ENCODE measurements at regions of chr10 and their contacts with region 1.

Region 1: DNA sequence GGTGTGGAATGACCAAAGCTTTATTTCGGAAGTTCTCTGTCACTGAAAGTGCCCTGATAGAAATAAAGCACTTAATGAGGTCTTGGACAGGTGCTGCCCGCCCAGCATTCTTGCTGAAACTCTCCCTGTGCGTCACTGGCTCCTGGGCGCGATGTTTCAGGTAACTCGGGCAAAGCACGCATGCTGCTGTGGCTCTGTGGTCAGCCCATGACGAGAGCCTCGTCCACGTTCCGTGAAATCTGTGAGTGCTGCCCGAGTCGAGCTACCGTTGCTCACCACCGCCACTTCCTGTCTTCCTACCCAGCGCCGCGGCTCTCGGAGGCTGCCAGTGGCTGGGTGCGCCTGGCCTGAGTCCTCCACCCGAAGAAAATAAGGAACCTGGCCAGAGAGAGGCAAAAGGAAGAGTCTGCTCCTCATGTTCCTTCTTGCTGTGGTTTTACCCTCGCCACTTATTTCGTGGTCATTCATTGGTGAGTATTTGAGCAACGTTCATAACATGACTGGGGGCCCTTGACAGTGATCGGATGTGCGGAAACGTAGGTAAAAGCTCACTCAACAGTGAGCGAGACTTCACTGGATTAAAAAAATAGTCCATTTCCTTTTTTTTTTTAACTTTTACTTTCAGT is 95.5 kb downstream of the MAP3K8 start:
- DNase-seq: peak; percentile 94
- H3K4me3 Mint-ChIP-seq: peak overlapping the region; percentile 78
- H3K27ac Mint-ChIP-seq: peak overlapping the region; percentile 90
- H3K4me1 Mint-ChIP-seq: peaks cover 66% of the 10 kb centered on the region
- H3K27me3 Mint-ChIP-seq: no peaks in the 10 kb centered on the region

Region 2: DNA sequence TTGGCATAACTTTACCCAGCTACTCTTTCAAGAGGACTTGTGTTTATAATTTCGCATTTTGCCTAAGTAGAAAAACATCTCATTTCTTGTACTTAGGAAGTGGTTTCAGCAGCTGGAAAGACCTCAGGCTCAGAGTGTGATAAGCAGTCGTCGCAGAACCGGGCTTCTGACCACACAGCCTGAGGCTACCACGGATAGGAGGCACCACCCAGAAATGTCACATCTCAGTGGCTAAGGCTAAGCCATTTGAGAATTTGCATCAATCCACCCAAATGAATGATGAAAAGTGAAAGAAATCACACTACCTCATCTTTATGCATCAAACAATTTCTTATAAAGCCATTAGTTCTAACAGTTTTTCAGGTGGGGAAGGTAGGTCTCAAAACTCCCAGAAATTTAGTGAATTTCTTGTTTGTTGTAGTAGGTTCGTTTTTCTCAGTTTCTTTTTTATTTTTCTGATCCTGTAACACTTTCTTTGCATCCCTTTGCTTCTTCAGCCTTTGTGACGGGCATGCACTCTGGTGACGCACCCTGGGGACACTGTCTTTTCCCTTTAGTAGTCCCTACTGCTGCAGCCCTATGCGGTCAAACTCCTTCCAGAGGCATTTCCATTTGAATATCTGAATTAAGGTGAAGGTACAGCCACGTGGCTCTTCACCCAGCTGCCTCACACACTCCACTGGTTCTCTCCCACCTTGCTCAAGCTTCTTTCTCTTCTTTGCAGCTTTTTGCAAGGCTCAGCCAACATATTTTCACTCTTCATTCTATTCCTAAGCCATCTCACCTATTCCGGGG is 27.0 kb before region 1 on chr10:
- intact Hi-C with region 1: loop called (anchors 2 kb)
- DNase-seq: peak; percentile 90
- H3K4me3 Mint-ChIP-seq: peak overlapping the region; percentile 38
- H3K27ac Mint-ChIP-seq: peak overlapping the region; percentile 62
- H3K4me1 Mint-ChIP-seq: peaks cover 71% of the 10 kb centered on the region
- H3K27me3 Mint-ChIP-seq: peaks cover 1% of the 10 kb centered on the region

Region 3: GRCh38 chr10:30510169-30510930 is 19.1 kb before region 1 on chr10:
- intact Hi-C with region 1: loop called (anchors 2 kb)
- DNase-seq: no peak
- H3K4me3 Mint-ChIP-seq: no peak overlapping the region
- H3K27ac Mint-ChIP-seq: peak overlapping the region; percentile 69
- H3K4me1 Mint-ChIP-seq: peaks cover 30% of the 10 kb centered on the region
- H3K27me3 Mint-ChIP-seq: no peaks in the 10 kb centered on the region

Region 4: DNA sequence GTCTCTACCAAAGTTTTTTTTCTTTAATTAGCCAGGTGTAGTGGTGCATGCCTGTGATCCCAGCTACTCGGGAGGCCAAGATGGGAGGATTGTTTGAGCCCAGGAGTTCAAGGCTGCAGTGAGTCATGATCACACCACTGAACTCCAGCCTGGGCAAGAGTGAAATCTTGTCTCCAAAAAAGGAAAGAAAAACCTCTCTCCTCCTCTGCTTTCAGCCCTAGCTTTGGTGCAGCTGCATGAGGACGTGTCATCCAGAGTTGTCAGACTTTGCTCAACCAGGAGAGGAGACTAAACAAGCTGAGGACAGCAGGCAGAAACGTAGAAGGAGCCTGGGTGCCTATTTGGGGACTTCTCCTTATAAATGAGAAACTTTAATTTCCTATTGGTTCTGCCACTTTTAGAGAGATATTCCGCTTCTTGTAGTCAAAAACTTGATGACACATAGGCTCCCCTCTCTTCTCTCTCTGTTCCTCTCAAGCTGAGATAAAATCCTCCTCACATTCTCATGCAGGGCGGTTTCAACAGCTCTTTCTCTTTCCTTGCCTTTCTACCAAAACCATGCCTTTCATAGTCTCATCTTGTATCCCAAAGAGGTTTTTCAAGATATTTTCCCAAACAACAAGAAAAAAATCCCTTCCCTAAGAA is 1193.7 kb after region 1 on chr10:
- intact Hi-C with region 1: no loop called
- DNase-seq: no peak
- H3K4me3 Mint-ChIP-seq: no peak overlapping the region
- H3K27ac Mint-ChIP-seq: peak overlapping the region; percentile 38
- H3K4me1 Mint-ChIP-seq: peaks cover 10% of the 10 kb centered on the region
- H3K27me3 Mint-ChIP-seq: no peaks in the 10 kb centered on the region